ENCODE measurements at regions of chr7 and their contacts with region 1.

Region 1: GRCh38 chr7:24819916-24820689 is 62.8 kb upstream of the GSDME start:
- DNase-seq: peak; percentile 76 to 87 (median 85)
- ATAC-seq: peak; percentile 88 to 92
- H3K4me3 ChIP-seq: no peak overlapping the region
- H3K27ac ChIP-seq: no peak overlapping the region
- H3K4me1 ChIP-seq: peaks cover 5% of the 10 kb centered on the region
- H3K27me3 ChIP-seq: no peaks in the 10 kb centered on the region

Region 2: GRCh38 chr7:24907311-24907886 is 87.3 kb after region 1 on chr7:
- intact Hi-C with region 1: loop called in 1 of 4 experiments (anchors 10 kb)
- DNase-seq: no peak
- ATAC-seq: peak in 1 of 2 donors; percentile 35
- H3K4me3 ChIP-seq: no peak overlapping the region
- H3K27ac ChIP-seq: no peak overlapping the region
- H3K4me1 ChIP-seq: peaks cover 7% of the 10 kb centered on the region
- H3K27me3 ChIP-seq: no peaks in the 10 kb centered on the region

Region 3: DNA sequence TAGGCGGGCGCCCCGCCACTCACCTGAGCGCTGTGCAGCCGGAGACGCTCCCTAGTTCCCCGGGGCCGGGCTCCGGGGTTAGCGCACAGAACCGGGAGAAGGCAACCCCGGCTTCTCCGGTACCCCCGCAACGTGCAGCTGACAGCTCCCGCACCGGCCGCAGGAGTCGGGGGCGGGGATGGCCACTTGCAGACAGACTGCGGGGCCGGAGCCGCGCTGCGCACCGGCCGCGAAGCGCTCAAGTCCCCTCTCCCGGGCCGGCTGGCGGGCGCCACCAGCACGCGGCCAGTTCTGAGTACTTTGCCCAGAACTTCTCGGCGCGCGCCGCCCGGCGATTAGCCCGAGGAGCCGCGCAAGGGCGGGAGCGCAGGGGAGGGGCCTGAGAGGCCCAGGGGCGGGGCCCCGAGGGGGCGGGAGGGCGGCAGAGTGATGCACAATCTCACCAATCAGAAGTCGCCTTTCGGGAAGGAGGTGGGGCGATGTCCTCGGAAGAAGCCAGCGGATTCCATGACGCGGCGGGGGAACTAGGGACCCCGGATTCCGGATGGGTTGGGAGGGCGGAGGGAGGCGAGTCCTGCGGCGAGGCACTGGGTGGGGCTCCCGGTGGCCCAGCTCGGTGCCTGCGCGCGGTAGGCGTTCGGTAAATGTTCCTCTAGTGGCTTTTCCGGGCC is 159.9 kb after region 1 on chr7 and contains the start of gene OSBPL3:
- intact Hi-C with region 1: loop called in 3 of 4 experiments (anchors 5 to 10 kb)
- DNase-seq: peak; percentile 96 to 98 (median 97)
- ATAC-seq: peak; percentile 98
- H3K4me3 ChIP-seq: peak within 1 kb of the TSS; percentile 82
- H3K27ac ChIP-seq: peak within 1 kb of the TSS; percentile 90
- H3K4me1 ChIP-seq: peaks cover 3% of the 10 kb centered on the region
- H3K27me3 ChIP-seq: no peaks in the 10 kb centered on the region
- total RNA-seq, gene OSBPL3: 9.0 to 12.9 (median 10.4) TPM

Region 4: DNA sequence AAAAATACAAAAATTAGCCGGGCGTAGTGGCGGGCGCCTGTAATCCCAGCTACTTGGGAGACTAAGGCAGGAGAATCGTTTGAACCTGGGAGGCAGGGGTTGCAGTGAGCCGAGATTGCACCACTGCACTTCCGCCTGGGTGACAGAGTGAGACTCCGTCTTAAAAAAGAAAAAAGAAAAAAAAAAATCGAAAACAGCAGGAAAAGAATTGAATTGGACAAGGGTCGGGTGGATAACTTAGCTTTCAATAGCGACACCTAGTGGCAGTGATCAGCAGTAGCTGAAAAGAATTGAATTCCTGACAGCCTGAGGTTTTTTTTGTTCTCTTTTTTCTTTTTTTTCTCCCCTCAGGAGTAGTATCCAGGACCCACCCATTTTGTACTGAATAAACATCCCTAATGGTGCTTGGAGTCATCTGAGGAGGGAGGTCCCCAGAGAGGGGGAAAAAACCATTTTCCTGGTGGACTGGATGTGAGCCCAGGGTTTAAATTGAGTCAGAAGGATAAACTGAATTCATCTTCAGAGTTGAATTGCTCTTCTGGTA is 249.9 kb after region 1 on chr7:
- intact Hi-C with region 1: loop called (anchors 2 to 5 kb)
- DNase-seq: peak in 2 of 3 donors; percentile 37 to 54
- ATAC-seq: peak; percentile 67 to 84
- H3K4me3 ChIP-seq: no peak overlapping the region
- H3K27ac ChIP-seq: no peak overlapping the region
- H3K4me1 ChIP-seq: peaks cover 3% of the 10 kb centered on the region
- H3K27me3 ChIP-seq: no peaks in the 10 kb centered on the region

Region 5: DNA sequence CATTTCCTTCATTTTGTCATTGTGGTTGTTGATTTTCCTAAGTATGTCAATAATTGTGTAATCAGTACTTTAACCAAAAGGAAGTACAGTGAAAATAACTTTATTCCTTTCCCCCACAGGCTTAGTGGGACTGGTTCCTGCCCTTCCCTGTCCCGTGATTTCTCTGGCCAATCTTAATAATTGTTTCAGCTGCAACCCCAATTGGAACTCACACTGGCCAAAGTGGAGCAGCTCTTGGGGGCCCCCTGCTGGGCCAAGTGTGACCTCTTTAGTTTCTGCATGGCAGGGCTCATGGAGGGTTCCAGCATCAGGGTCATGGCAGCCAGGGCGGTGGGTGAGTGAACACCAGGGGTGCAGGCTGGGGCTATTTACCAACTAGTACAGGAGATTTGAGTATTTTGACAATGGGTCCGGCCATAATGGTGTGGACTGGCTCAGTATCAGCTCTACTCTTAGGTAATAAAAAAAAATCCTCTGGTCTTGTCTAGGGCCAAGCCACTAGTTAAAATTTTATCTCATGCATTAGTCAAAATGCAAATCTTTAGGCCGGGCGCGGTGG is 273.2 kb after region 1 on chr7:
- intact Hi-C with region 1: loop called in 2 of 4 experiments (anchors 5 to 10 kb)
- DNase-seq: peak; percentile 69 to 87 (median 85)
- ATAC-seq: peak; percentile 83 to 84
- H3K4me3 ChIP-seq: no peak overlapping the region
- H3K27ac ChIP-seq: no peak overlapping the region
- H3K4me1 ChIP-seq: peaks cover 1% of the 10 kb centered on the region
- H3K27me3 ChIP-seq: no peaks in the 10 kb centered on the region